Body of pancreas (tissue), 4 donors: ENCODE measurements at regions of chr12 and their contacts with region 1.

Region 1: GRCh38 chr12:105382771-105383622 is 52.5 kb downstream of the C12orf75 start:
- DNase-seq: peak; percentile 12 to 70 (median 26)
- ATAC-seq: peak; percentile 89
- H3K4me3 ChIP-seq: no peak overlapping the region
- H3K27ac ChIP-seq: peak overlapping the region in 1 of 4 donors; percentile 20
- H3K4me1 ChIP-seq: peaks cover 6% of the 10 kb centered on the region
- H3K27me3 ChIP-seq: no peaks in the 10 kb centered on the region
- CTCF ChIP-seq: peak; percentile 57 to 93 (median 89)
- POLR2A ChIP-seq: no peak

Region 2: GRCh38 chr12:104201238-104202001 is 1181.6 kb before region 1 on chr12:
- intact Hi-C with region 1: loop called (anchors 10 kb)
- DNase-seq: peak; percentile 46 to 61 (median 52)
- ATAC-seq: peak; percentile 66
- H3K4me3 ChIP-seq: no peak overlapping the region
- H3K27ac ChIP-seq: no peak overlapping the region
- H3K4me1 ChIP-seq: no peaks in the 10 kb centered on the region
- H3K27me3 ChIP-seq: no peaks in the 10 kb centered on the region
- CTCF ChIP-seq: peak; percentile 72 to 90 (median 84)
- POLR2A ChIP-seq: no peak

Region 3: DNA sequence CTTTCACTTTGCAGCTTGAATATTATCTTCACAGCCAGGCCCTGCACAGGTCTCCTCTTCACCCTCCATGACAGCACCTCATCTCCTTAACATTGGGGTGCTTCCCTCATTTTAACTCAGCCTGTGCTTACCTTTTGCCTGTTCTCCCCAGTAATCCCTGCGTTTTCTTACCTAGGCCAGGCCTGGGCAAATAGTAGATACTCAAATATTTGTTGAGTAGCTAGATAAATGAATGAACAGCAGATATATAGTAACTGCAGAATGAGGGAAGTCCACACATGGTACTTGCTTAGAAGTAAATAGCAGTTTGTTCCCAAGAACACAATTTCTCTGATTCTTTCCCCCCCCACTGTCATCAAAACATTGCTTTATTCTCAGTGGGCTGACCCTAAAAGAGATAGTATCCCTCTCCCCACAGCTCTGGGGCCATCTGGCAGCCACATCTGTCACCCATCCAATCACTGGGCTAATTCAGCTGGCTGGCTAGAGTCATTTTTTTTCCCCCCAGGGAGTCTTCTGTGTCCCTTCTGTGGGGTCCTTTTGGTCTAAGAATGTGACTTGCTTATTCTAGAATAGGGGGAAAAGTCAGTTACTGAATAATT is 190.3 kb before region 1 on chr12:
- intact Hi-C with region 1: loop called (anchors 10 kb)
- DNase-seq: no peak
- ATAC-seq: no peak
- H3K4me3 ChIP-seq: no peak overlapping the region
- H3K27ac ChIP-seq: no peak overlapping the region
- H3K4me1 ChIP-seq: no peaks in the 10 kb centered on the region
- H3K27me3 ChIP-seq: no peaks in the 10 kb centered on the region
- CTCF ChIP-seq: no peak
- POLR2A ChIP-seq: no peak